A673 (cell line): ENCODE measurements at regions of chr12 and their contacts with region 1.

Region 1: GRCh38 chr12:32302218-32303173 is 96.9 kb upstream of the FGD4 start:
- DNase-seq: peak; percentile 49
- H3K4me3 ChIP-seq: no peak overlapping the region
- H3K27ac ChIP-seq: no peak overlapping the region
- H3K4me1 ChIP-seq: peaks cover 7% of the 10 kb centered on the region
- H3K27me3 ChIP-seq: no peaks in the 10 kb centered on the region
- CTCF ChIP-seq: peak; percentile 59

Region 2: GRCh38 chr12:31651893-31652521 is 650.5 kb before region 1 on chr12:
- CTCF ChIA-PET with region 1: no interaction called
- POLR2A ChIA-PET with region 1: no interaction called
- intact Hi-C with region 1: loop called (anchors 2 kb)
- DNase-seq: no peak
- H3K4me3 ChIP-seq: no peak overlapping the region
- H3K27ac ChIP-seq: no peak overlapping the region
- H3K4me1 ChIP-seq: peaks cover 4% of the 10 kb centered on the region
- H3K27me3 ChIP-seq: no peaks in the 10 kb centered on the region
- CTCF ChIP-seq: no peak

Region 3: GRCh38 chr12:31959161-31959700 is 343.3 kb before region 1 on chr12 and contains the start of gene RESF1:
- CTCF ChIA-PET with region 1: no interaction called
- POLR2A ChIA-PET with region 1: no interaction called
- intact Hi-C with region 1: loop called (anchors 10 kb)
- DNase-seq: peak; percentile 95
- H3K4me3 ChIP-seq: peak within 1 kb of the TSS; percentile 60
- H3K27ac ChIP-seq: peak within 1 kb of the TSS; percentile 85
- H3K4me1 ChIP-seq: peaks cover 22% of the 10 kb centered on the region
- H3K27me3 ChIP-seq: no peaks in the 10 kb centered on the region
- CTCF ChIP-seq: 0 out of 2 replicates have a peak, but pooled peaks have one; percentile 4
- total RNA-seq, gene RESF1: 48.2 and 63.7 TPM in 2 replicates